IMR-90 (cell line): ENCODE measurements at regions of chr11 and their contacts with region 1.

Region 1: DNA sequence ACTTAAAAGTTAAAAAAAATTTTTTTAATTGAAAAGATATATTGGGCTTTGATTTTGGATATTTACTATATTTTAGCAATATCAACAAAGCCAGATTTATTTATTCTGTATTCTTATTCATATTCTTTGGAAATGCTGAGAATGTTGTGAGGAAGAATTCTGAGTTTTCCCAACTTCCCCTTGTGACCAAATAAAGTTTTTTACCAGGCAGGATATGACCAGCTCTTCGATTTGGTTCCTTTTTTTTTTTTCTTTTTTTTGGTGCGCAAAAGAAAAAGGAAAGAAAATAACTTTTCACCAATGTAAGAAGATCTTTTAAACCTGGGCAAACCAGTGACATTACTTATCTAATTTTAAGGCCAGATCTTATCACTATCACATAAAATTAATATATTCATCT is 12.9 kb downstream of the TCP11L1 start:
- DNase-seq: no peak
- ATAC-seq: no peak
- H3K4me3 ChIP-seq: no peak overlapping the region
- H3K27ac ChIP-seq: no peak overlapping the region
- H3K4me1 ChIP-seq: no peaks in the 10 kb centered on the region
- H3K27me3 ChIP-seq: no peaks in the 10 kb centered on the region
- CTCF ChIP-seq: no peak
- POLR2A ChIP-seq: no peak
- RAD21 ChIP-seq: no peak

Region 2: GRCh38 chr11:32899438-32899837 is 152.8 kb before region 1 on chr11:
- CTCF ChIA-PET with region 1: no interaction called
- POLR2A ChIA-PET with region 1: no interaction called
- dilution Hi-C with region 1: no loop called
- in situ Hi-C with region 1: no loop called
- intact Hi-C with region 1: loop called (anchors 5 kb)
- DNase-seq: no peak
- ATAC-seq: no peak
- H3K4me3 ChIP-seq: no peak overlapping the region
- H3K27ac ChIP-seq: no peak overlapping the region
- H3K4me1 ChIP-seq: no peaks in the 10 kb centered on the region
- H3K27me3 ChIP-seq: no peaks in the 10 kb centered on the region
- CTCF ChIP-seq: no peak
- POLR2A ChIP-seq: no peak
- RAD21 ChIP-seq: no peak

Region 3: GRCh38 chr11:33700425-33701271 is 648.4 kb after region 1 on chr11 and contains the start of gene C11orf91:
- CTCF ChIA-PET with region 1: no interaction called
- POLR2A ChIA-PET with region 1: no interaction called
- dilution Hi-C with region 1: no loop called
- in situ Hi-C with region 1: no loop called
- intact Hi-C with region 1: no loop called
- DNase-seq: peak; percentile 94
- ATAC-seq: peak; percentile 93
- H3K4me3 ChIP-seq: peak within 1 kb of the TSS; percentile 65
- H3K27ac ChIP-seq: peak within 1 kb of the TSS; percentile 76
- H3K4me1 ChIP-seq: peaks cover 23% of the 10 kb centered on the region
- H3K27me3 ChIP-seq: no peaks in the 10 kb centered on the region
- CTCF ChIP-seq: no peak
- POLR2A ChIP-seq: peak; percentile 63
- RAD21 ChIP-seq: no peak
- total RNA-seq, gene C11orf91: not detected in 2 replicates